ENCODE measurements at regions of chr6 and their contacts with region 1.

Region 1: GRCh38 chr6:79078075-79079025 is at the start of gene PHIP:
- DNase-seq: peak; percentile 92
- H3K4me3 Mint-ChIP-seq: peak within 1 kb of the TSS; percentile 84
- H3K27ac Mint-ChIP-seq: peak within 1 kb of the TSS; percentile 98
- H3K4me1 Mint-ChIP-seq: peaks cover 44% of the 10 kb centered on the region
- H3K27me3 Mint-ChIP-seq: peaks cover 8% of the 10 kb centered on the region
- total RNA-seq, gene PHIP: 31.8 to 34.0 TPM

Region 2: DNA sequence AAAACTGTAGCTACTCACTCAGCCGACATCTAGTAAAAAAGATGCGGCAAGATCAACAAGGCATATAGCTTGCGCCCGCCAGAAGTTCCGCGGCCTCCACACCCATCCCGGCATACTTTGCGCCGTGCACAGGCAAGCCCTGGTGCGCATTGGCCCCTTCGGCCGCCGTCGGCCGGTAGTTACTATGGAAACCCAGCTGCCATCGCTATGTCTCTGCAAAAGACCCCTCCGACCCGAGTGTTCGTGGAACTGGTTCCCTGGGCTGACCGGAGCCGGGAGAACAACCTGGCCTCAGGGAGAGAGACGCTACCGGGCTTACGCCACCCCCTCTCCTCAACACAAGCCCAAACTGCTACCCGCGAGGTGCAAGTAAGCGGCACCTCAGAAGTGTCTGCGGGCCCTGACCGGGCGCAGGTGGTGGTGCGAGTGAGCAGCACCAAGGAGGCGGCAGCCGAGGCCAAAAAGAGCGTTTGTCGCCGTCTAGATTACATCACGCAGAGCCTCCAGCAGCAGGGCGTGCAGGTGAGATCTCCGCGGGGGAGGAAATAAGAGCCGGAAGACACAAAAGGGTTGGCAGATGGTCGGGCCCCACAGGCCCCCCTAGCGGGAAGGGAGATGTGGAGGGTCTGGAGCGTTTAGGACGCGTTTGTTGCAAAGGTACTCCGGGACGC is 210.8 kb before region 1 on chr6 and contains the start of gene IRAK1BP1:
- CTCF ChIA-PET with region 1: no interaction called
- POLR2A ChIA-PET with region 1: interaction called, 14 read pairs
- DNase-seq: peak; percentile 89
- H3K4me3 Mint-ChIP-seq: peak within 1 kb of the TSS; percentile 90
- H3K27ac Mint-ChIP-seq: peak within 1 kb of the TSS; percentile 81
- H3K4me1 Mint-ChIP-seq: peaks cover 31% of the 10 kb centered on the region
- H3K27me3 Mint-ChIP-seq: no peaks in the 10 kb centered on the region
- total RNA-seq, gene IRAK1BP1: 1.9 to 2.1 TPM

Region 3: DNA sequence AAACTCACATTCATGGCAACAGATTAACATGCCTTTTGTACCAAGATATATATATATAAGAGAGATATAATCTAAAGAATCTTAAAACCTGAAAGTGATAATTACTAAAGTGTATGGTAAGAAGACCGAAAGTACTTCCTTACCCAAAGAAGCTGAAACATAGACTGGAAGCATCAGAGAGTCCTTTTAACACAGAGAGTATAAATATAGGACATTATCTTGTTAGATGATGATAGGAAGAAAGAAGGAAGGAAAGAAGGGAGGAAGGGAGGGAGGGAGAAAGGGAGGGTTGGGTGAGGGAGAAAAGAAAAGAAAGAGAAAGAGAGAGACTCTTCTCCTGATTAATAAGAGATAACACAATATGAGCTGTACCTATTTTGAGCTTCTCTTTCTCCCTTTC is 68.5 kb before region 1 on chr6:
- CTCF ChIA-PET with region 1: no interaction called
- POLR2A ChIA-PET with region 1: interaction called, 12 read pairs
- DNase-seq: no peak
- H3K4me3 Mint-ChIP-seq: no peak overlapping the region
- H3K27ac Mint-ChIP-seq: no peak overlapping the region
- H3K4me1 Mint-ChIP-seq: peaks cover 10% of the 10 kb centered on the region
- H3K27me3 Mint-ChIP-seq: no peaks in the 10 kb centered on the region

Region 4: GRCh38 chr6:79042088-79042798 is 36.1 kb before region 1 on chr6:
- CTCF ChIA-PET with region 1: no interaction called
- POLR2A ChIA-PET with region 1: interaction called, 25 read pairs
- DNase-seq: no peak
- H3K4me3 Mint-ChIP-seq: no peak overlapping the region
- H3K27ac Mint-ChIP-seq: no peak overlapping the region
- H3K4me1 Mint-ChIP-seq: peaks cover 37% of the 10 kb centered on the region
- H3K27me3 Mint-ChIP-seq: no peaks in the 10 kb centered on the region

Region 5: GRCh38 chr6:79064635-79065034 is 13.7 kb before region 1 on chr6:
- CTCF ChIA-PET with region 1: interaction called, 4 read pairs
- POLR2A ChIA-PET with region 1: interaction called, 30 read pairs
- DNase-seq: no peak
- H3K4me3 Mint-ChIP-seq: no peak overlapping the region
- H3K27ac Mint-ChIP-seq: no peak overlapping the region
- H3K4me1 Mint-ChIP-seq: peaks cover 2% of the 10 kb centered on the region
- H3K27me3 Mint-ChIP-seq: no peaks in the 10 kb centered on the region

Region 6: DNA sequence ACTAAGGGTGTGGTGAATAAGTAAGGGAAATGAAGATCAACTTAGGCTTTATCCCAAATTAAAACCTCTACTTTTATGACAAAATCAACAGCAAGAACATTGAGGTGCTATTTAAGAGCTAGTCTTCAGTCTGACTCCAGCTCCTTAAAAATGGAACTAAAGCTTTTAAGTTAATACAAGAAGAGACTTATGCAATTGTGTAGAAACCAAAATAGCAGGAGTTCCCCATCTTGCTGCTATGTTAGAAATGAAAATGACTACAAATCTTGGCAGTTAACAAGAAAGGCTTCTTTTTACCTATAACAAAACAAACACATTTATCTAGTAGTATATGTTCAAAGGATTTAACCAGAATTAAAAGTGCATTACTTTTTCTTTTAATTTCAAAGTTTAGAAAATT is 130.5 kb after region 1 on chr6:
- CTCF ChIA-PET with region 1: no interaction called
- POLR2A ChIA-PET with region 1: no interaction called
- DNase-seq: no peak
- H3K4me3 Mint-ChIP-seq: no peak overlapping the region
- H3K27ac Mint-ChIP-seq: no peak overlapping the region
- H3K4me1 Mint-ChIP-seq: no peaks in the 10 kb centered on the region
- H3K27me3 Mint-ChIP-seq: no peaks in the 10 kb centered on the region

Region 7: GRCh38 chr6:79239538-79240168 is 161.3 kb after region 1 on chr6:
- CTCF ChIA-PET with region 1: interaction called, 3 read pairs
- POLR2A ChIA-PET with region 1: interaction called, 12 read pairs
- DNase-seq: no peak
- H3K4me3 Mint-ChIP-seq: no peak overlapping the region
- H3K27ac Mint-ChIP-seq: no peak overlapping the region
- H3K4me1 Mint-ChIP-seq: peaks cover 12% of the 10 kb centered on the region
- H3K27me3 Mint-ChIP-seq: no peaks in the 10 kb centered on the region